ENCODE measurements at regions of chr16 and their contacts with region 1.

Region 1: GRCh38 chr16:69726296-69727060 is at the start of gene NQO1:
- DNase-seq: peak; percentile 75
- H3K4me3 ChIP-seq: peak within 1 kb of the TSS; percentile 68
- CTCF ChIP-seq: no peak

Region 2: GRCh38 chr16:69709456-69710084 is 16.9 kb before region 1 on chr16:
- CTCF ChIA-PET with region 1: interaction called, 25 read pairs
- POLR2A ChIA-PET with region 1: interaction called, 4 read pairs
- DNase-seq: no peak
- H3K4me3 ChIP-seq: no peak overlapping the region
- CTCF ChIP-seq: peak; percentile 39

Region 3: GRCh38 chr16:69761983-69762813 is 35.7 kb after region 1 on chr16 and contains the start of gene WWP2:
- CTCF ChIA-PET with region 1: no interaction called
- POLR2A ChIA-PET with region 1: no interaction called
- DNase-seq: no peak
- H3K4me3 ChIP-seq: peak within 1 kb of the TSS; percentile 89
- CTCF ChIP-seq: no peak

Region 4: GRCh38 chr16:69773260-69773947 is 46.9 kb after region 1 on chr16:
- CTCF ChIA-PET with region 1: no interaction called
- POLR2A ChIA-PET with region 1: no interaction called
- DNase-seq: no peak
- H3K4me3 ChIP-seq: no peak overlapping the region
- CTCF ChIP-seq: no peak